Aorta (tissue), 5 donors: ENCODE measurements at regions of chr20 and their contacts with region 1.

Region 1: GRCh38 chr20:58692594-58693226 is at the start of gene NPEPL1:
- DNase-seq: peak; percentile 81 to 90
- ATAC-seq: peak; percentile 83
- H3K4me3 ChIP-seq: peak within 1 kb of the TSS; percentile 32 to 35
- H3K27ac ChIP-seq: peak within 1 kb of the TSS; percentile 30 to 32
- H3K4me1 ChIP-seq: no peaks in the 10 kb centered on the region
- H3K27me3 ChIP-seq: no peaks in the 10 kb centered on the region
- total RNA-seq, gene NPEPL1: 22.1 to 53.1 TPM

Region 2: DNA sequence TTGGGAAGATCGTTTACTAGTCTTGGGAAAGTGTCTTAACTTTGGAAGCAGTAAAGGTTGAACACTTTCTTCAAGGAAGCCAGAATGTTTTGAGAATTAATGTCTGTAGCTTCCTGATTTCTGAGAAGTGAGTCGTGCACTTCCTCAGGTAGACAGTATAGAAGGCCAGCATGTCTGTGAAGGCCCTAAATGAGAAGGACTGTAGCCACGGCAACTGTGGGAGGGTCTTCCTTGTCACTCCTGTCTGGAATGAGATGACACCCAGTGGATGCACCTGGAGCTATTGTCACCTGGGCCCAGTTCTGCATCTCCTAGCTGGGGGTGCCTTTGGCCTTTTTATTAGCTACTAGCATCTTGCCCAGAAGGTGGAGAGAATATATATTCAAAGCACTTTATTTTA is 32.9 kb before region 1 on chr20:
- intact Hi-C with region 1: loop called in 1 of 2 experiments (anchors 5 kb)
- DNase-seq: no peak
- ATAC-seq: no peak
- H3K4me3 ChIP-seq: no peak overlapping the region
- H3K27ac ChIP-seq: no peak overlapping the region
- H3K4me1 ChIP-seq: peaks cover 3 to 4% of the 10 kb centered on the region in 2 donors
- H3K27me3 ChIP-seq: no peaks in the 10 kb centered on the region